ENCODE measurements at regions of chr11 and their contacts with region 1.

Region 1: DNA sequence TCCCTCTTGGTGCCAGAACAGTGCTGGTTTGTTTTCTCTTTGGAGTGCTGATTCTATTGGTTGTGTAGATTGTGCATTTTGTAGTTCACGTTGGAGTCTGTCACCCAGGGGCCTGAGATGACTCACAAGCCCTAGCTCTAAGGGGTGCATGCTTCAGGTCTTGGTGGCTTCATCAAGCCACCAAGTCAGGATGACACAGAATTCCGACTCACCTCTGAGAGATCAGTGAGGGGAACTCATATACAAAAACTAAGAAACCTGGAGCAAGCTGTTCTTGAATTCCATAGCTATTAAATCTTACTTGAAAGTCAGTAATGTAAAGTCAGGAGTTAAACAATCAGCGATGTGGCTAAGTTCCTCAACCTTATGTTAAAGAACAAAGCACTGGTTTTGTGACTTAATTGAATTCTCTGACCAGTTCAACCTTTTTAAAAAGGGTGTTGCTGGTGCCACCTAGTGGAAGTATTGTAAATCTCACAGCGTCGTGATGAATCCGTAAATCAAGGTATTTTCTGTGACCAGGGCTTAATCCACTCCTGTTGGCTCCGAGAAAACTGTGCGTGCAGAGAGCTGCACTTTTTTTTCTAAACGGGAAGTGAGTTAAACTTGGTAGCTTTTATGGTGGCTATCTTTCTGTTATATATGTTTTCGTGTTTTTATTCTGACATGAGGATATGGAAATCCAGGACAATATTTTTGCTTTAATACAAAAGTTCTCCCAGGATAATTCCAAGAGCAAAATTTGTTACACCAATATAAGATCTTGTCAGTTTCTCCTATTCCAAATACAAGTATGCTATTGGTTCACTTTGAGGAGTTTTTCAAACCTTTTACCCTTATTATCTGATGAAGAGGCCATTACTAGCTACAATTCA is 14.6 kb downstream of the MMP13 start:
- DNase-seq: peak; percentile 50
- H3K4me3 ChIP-seq: no peak overlapping the region
- H3K27ac ChIP-seq: no peak overlapping the region
- H3K4me1 ChIP-seq: no peaks in the 10 kb centered on the region
- H3K27me3 ChIP-seq: no peaks in the 10 kb centered on the region
- CTCF ChIP-seq: peak; percentile 33 to 80 (median 75)
- POLR2A ChIP-seq: no peak

Region 2: GRCh38 chr11:102831489-102832440 is 109.2 kb before region 1 on chr11:
- intact Hi-C with region 1: loop called (anchors 10 kb)
- DNase-seq: peak; percentile 30
- H3K4me3 ChIP-seq: peak overlapping the region in 1 of 2 donors; percentile 7
- H3K27ac ChIP-seq: no peak overlapping the region
- H3K4me1 ChIP-seq: no peaks in the 10 kb centered on the region
- H3K27me3 ChIP-seq: no peaks in the 10 kb centered on the region
- CTCF ChIP-seq: peak in 3 of 4 experiments; percentile 14 to 46 (median 40)
- POLR2A ChIP-seq: no peak

Measured in prostate gland (tissue), 2 donors.